CD8-positive, alpha-beta T cell (primary cell): ENCODE measurements at regions of chr22 and their contacts with region 1.

Region 1: DNA sequence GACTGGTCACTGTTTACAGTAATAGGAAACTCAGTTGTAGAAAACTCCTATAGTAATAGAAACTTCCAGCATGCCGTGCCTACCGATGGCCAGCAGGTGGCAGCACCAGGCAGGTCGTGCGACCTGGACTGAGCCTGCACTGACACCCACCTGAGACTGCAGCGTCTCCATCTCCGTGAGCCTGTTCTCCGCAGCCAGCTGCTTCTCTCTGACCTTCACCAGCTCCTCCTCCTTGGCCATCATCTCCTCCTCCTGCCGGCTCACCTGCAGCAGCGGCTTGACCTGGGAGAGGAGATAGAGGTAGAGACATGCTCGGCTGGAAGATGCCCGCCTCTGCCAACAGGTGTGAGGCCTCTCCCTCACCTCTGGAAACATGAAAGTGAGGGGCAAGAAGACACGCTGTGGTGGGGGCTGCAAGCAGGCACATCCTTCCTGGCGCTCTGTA is 48.5 kb downstream of the APOL1 start:
- DNase-seq: peak; percentile 67 to 92 (median 85)
- ATAC-seq: peak; percentile 94
- H3K4me3 ChIP-seq: no peak overlapping the region
- H3K4me3 Mint-ChIP-seq: no peak overlapping the region
- H3K27ac ChIP-seq: peak overlapping the region in 1 of 2 experiments; percentile 34
- H3K27ac Mint-ChIP-seq: peak overlapping the region; percentile 82
- H3K4me1 ChIP-seq: peaks cover 6% of the 10 kb centered on the region
- H3K4me1 Mint-ChIP-seq: peaks cover 9% of the 10 kb centered on the region
- H3K27me3 ChIP-seq: no peaks in the 10 kb centered on the region
- H3K27me3 Mint-ChIP-seq: no peaks in the 10 kb centered on the region
- CTCF ChIP-seq: peak; percentile 89

Region 2: GRCh38 chr22:36277482-36278291 is 23.7 kb before region 1 on chr22:
- CTCF ChIA-PET with region 1: interaction called, 19 read pairs
- POLR2A ChIA-PET with region 1: interaction called, 4 read pairs
- intact Hi-C with region 1: no loop called
- DNase-seq: peak; percentile 44 to 84 (median 64)
- ATAC-seq: peak; percentile 85
- H3K4me3 ChIP-seq: no peak overlapping the region
- H3K4me3 Mint-ChIP-seq: peak overlapping the region; percentile 11
- H3K27ac ChIP-seq: peak overlapping the region in 1 of 2 experiments; percentile 30
- H3K27ac Mint-ChIP-seq: peak overlapping the region; percentile 50
- H3K4me1 ChIP-seq: peaks cover 21% of the 10 kb centered on the region
- H3K4me1 Mint-ChIP-seq: peaks cover 18% of the 10 kb centered on the region
- H3K27me3 ChIP-seq: no peaks in the 10 kb centered on the region
- H3K27me3 Mint-ChIP-seq: no peaks in the 10 kb centered on the region
- CTCF ChIP-seq: peak; percentile 73

Region 3: DNA sequence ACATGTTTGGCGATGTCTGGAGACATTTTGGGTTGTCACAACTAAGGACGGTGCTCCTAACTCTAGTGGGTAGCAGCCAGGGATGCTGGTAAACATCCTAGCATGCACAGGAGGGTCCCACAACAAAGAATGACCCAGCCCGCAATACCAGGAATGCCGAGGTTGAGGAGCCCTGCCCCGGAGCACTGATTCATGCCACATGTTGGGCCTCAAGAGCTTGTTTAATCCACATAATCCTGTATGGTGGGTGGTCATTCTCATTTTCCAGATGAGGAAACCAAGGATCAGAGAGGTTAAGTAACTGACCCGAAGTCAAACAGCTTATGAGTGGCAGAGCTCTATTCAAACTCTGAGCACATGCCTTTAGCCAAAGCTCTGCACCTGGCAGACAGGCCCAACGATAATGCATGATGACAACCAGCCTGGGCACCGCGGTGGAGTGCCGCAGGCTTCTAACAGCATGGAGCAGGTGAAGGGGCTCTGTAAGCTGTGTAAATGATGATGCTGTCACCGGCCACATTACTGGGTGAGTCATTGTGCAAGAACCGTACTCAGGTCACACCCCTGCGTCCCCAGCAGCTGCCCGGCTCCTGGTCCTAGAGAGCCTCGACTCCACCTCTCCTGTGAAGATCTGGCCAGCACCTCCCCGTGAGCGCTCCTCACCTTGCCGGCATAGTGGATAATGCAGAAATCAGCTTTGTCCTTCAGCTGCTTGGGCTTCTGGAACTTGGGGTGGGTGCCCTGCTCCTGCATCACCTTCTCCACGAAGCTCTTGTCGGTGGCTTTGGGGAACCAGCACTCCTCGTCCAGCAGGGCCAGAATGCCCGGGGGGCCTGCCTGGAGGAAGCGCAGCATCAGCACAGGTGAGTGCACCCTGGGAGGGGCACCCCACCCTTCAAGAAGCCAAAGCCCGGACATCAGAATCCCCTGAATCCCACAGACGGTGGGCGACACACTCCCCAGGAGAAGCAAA is 10.3 kb after region 1 on chr22:
- CTCF ChIA-PET with region 1: interaction called, 76 read pairs
- POLR2A ChIA-PET with region 1: interaction called, 3 read pairs
- intact Hi-C with region 1: no loop called
- DNase-seq: no peak
- ATAC-seq: no peak
- H3K4me3 ChIP-seq: no peak overlapping the region
- H3K4me3 Mint-ChIP-seq: no peak overlapping the region
- H3K27ac ChIP-seq: no peak overlapping the region
- H3K27ac Mint-ChIP-seq: no peak overlapping the region
- H3K4me1 ChIP-seq: no peaks in the 10 kb centered on the region
- H3K4me1 Mint-ChIP-seq: peaks cover 3% of the 10 kb centered on the region
- H3K27me3 ChIP-seq: no peaks in the 10 kb centered on the region
- H3K27me3 Mint-ChIP-seq: no peaks in the 10 kb centered on the region
- CTCF ChIP-seq: no peak

Region 4: DNA sequence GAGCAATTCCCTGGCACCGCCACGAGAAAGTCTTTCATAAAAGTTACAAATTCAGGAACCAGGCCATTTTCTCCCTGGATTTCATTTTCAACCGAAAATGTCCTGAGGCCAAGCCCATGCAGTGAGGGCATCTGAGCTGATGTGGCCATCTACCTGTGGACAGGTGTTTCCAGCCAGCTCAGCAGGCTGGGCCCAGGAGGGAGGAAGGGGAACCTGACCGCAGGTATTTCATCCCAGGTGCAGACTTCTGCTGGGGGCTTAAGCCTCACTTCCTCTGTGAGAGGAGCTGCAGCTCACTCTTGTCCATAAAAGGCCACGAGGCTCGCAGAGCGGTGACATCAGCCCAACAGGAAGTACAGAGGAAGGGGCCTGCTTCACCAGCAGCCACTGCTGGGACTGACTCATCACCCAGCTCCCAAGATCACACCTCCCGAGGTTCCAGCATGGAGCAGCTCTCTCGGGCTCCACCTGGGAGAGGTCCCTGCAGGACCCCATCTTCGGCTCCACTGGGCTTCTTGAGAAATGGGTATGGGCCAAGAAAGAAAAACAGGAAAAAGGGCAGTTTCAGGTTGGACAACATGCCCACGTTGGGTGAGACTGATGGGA is 30.0 kb after region 1 on chr22:
- CTCF ChIA-PET with region 1: interaction called, 57 read pairs
- POLR2A ChIA-PET with region 1: interaction called, 11 read pairs
- intact Hi-C with region 1: loop called in 1 of 2 experiments (anchors 1 kb)
- DNase-seq: peak; percentile 48 to 94 (median 81)
- ATAC-seq: peak; percentile 51
- H3K4me3 ChIP-seq: peak overlapping the region; percentile 38 to 42
- H3K4me3 Mint-ChIP-seq: peak overlapping the region; percentile 86
- H3K27ac ChIP-seq: peak overlapping the region; percentile 80 to 93
- H3K27ac Mint-ChIP-seq: peak overlapping the region; percentile 99
- H3K4me1 ChIP-seq: peaks cover 95% of the 10 kb centered on the region
- H3K4me1 Mint-ChIP-seq: peaks cover 99% of the 10 kb centered on the region
- H3K27me3 ChIP-seq: no peaks in the 10 kb centered on the region
- H3K27me3 Mint-ChIP-seq: no peaks in the 10 kb centered on the region
- CTCF ChIP-seq: no peak

Region 5: DNA sequence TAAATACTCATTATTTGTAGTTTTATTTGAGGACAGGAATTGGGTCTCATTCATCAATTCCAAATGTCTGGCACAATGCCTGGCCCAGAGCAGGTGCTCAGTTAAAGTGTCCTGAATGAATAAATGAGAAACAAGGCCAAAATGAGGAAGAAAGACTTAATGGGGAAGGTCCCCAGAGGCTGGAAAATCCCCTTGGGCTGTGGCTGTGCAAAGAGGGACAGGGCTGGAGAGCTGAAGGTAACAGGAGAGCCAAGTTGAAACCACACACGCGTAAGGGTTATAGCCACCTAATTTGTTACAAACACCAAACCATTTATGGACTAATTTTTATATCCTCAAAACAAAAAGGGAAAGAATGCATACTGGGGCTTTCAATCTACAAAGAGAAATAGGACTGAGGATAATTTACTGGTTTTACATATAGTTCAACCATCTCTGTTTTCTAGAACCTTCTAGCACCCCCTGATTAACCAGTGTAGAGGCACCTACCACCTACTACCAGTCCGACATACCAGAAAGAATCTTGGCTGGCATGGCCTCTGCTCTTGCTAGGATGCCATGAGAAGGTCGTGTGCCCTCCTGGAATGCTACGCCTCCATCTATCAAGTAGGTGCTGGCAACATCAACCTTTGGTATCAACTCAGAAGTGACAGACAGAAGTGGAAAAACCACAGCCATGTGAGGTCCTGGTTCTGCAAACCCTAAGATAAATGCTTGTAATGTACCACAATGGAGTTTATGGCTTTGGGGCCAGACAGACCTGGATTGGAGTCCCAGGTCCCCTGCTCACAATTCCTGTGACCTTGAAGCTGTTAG is 58.0 kb after region 1 on chr22:
- CTCF ChIA-PET with region 1: interaction called, 16 read pairs
- POLR2A ChIA-PET with region 1: no interaction called
- intact Hi-C with region 1: loop called in 1 of 2 experiments (anchors 2 kb)
- DNase-seq: peak in 2 of 9 experiments; percentile 62 to 75
- ATAC-seq: no peak
- H3K4me3 ChIP-seq: no peak overlapping the region
- H3K4me3 Mint-ChIP-seq: peak overlapping the region; percentile 67
- H3K27ac ChIP-seq: peak overlapping the region in 1 of 2 experiments; percentile 77
- H3K27ac Mint-ChIP-seq: peak overlapping the region; percentile 92
- H3K4me1 ChIP-seq: peaks cover 97% of the 10 kb centered on the region
- H3K4me1 Mint-ChIP-seq: peaks cover 95% of the 10 kb centered on the region
- H3K27me3 ChIP-seq: no peaks in the 10 kb centered on the region
- H3K27me3 Mint-ChIP-seq: no peaks in the 10 kb centered on the region
- CTCF ChIP-seq: no peak

Region 6: GRCh38 chr22:36409911-36410756 is 108.7 kb after region 1 on chr22:
- CTCF ChIA-PET with region 1: interaction called, 18 read pairs
- POLR2A ChIA-PET with region 1: no interaction called
- intact Hi-C with region 1: loop called in 1 of 2 experiments (anchors 1 kb)
- DNase-seq: peak; percentile 18 to 85 (median 75)
- ATAC-seq: peak; percentile 70
- H3K4me3 ChIP-seq: peak overlapping the region; percentile 28 to 58
- H3K4me3 Mint-ChIP-seq: peak overlapping the region; percentile 72
- H3K27ac ChIP-seq: peak overlapping the region; percentile 40 to 53
- H3K27ac Mint-ChIP-seq: peak overlapping the region; percentile 93
- H3K4me1 ChIP-seq: peaks cover 57% of the 10 kb centered on the region
- H3K4me1 Mint-ChIP-seq: peaks cover 51% of the 10 kb centered on the region
- H3K27me3 ChIP-seq: no peaks in the 10 kb centered on the region
- H3K27me3 Mint-ChIP-seq: no peaks in the 10 kb centered on the region
- CTCF ChIP-seq: no peak

Region 7: DNA sequence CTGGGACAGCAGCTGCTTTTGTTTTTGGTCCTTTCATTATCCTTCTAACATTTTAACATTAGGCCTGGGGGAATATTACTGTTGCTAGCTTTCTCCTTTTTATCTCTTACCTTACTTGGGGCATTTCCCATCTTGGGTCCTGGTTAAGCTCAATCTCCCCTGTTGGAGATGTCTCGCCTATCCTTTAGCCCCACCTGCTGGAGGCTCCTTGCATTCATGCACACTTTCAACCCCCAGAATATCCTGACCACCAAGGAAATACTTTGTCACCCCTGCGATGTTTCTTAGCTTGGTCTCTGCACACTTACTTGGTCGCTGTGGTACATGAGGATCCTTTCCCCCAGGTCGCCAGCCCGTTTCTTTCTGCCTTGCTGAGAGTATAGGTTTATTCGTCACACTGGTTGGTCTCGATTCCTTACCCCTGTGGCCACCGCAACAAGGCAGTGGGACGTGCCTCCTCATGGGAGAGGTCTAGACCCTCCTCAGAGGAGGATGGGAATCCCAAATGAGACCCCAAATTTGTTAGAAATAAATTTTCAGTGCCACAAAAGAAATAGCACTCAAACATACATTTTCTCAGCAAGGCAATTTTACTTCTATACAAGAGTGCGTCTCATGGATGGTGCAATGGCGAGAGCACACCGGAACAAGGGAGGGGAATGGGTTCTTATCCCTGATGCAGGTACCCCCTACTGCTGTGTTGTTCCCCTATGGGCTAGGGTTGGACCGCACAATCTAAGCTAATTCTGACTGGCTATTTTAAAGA is 185.4 kb after region 1 on chr22:
- CTCF ChIA-PET with region 1: interaction called, 75 read pairs
- POLR2A ChIA-PET with region 1: interaction called, 3 read pairs
- intact Hi-C with region 1: loop called (anchors 1 kb)
- DNase-seq: peak; percentile 31 to 84 (median 71)
- ATAC-seq: no peak
- H3K4me3 ChIP-seq: no peak overlapping the region
- H3K4me3 Mint-ChIP-seq: no peak overlapping the region
- H3K27ac ChIP-seq: no peak overlapping the region
- H3K27ac Mint-ChIP-seq: no peak overlapping the region
- H3K4me1 ChIP-seq: peaks cover 3% of the 10 kb centered on the region
- H3K4me1 Mint-ChIP-seq: peaks cover 5% of the 10 kb centered on the region
- H3K27me3 ChIP-seq: no peaks in the 10 kb centered on the region
- H3K27me3 Mint-ChIP-seq: no peaks in the 10 kb centered on the region
- CTCF ChIP-seq: peak; percentile 62